Gastrocnemius medialis (tissue), 4 donors: ENCODE measurements at regions of chr2 and their contacts with region 1.

Region 1: GRCh38 chr2:173021939-173022371 is 53.7 kb upstream of the MAP3K20 start:
- DNase-seq: no peak
- ATAC-seq: peak in 1 of 2 donors; percentile 43
- H3K4me3 ChIP-seq: no peak overlapping the region
- H3K27ac ChIP-seq: no peak overlapping the region
- H3K4me1 ChIP-seq: peaks cover 7% of the 10 kb centered on the region in 2 donors
- H3K27me3 ChIP-seq: no peaks in the 10 kb centered on the region
- CTCF ChIP-seq: peak in 4 of 5 experiments; percentile 16 to 45 (median 36)
- POLR2A ChIP-seq: no peak

Region 2: GRCh38 chr2:171811245-171811628 is 1210.7 kb before region 1 on chr2:
- in situ Hi-C with region 1: no loop called
- intact Hi-C with region 1: no loop called
- DNase-seq: no peak
- ATAC-seq: peak; percentile 53 to 56
- H3K4me3 ChIP-seq: no peak overlapping the region
- H3K27ac ChIP-seq: peak overlapping the region in 2 of 4 donors; percentile 1 to 31
- H3K4me1 ChIP-seq: peaks cover 0 to 35% of the 10 kb centered on the region in 2 donors
- H3K27me3 ChIP-seq: no peaks in the 10 kb centered on the region
- CTCF ChIP-seq: peak in 4 of 5 experiments; percentile 21 to 40 (median 28)
- POLR2A ChIP-seq: no peak

Region 3: GRCh38 chr2:172977270-172978062 is 44.5 kb before region 1 on chr2:
- in situ Hi-C with region 1: loop called in 2 of 4 experiments (anchors 5 kb)
- intact Hi-C with region 1: loop called (anchors 1 kb)
- DNase-seq: peak in 1 of 2 donors; percentile 36
- ATAC-seq: peak; percentile 81 to 84
- H3K4me3 ChIP-seq: no peak overlapping the region
- H3K27ac ChIP-seq: no peak overlapping the region
- H3K4me1 ChIP-seq: peaks cover 0 to 7% of the 10 kb centered on the region in 2 donors
- H3K27me3 ChIP-seq: no peaks in the 10 kb centered on the region
- CTCF ChIP-seq: peak; percentile 26 to 62 (median 55)
- POLR2A ChIP-seq: no peak

Region 4: GRCh38 chr2:172985139-172985901 is 36.6 kb before region 1 on chr2:
- in situ Hi-C with region 1: no loop called
- intact Hi-C with region 1: loop called (anchors 1 kb)
- DNase-seq: peak; percentile 52 to 62
- ATAC-seq: peak; percentile 91 to 92
- H3K4me3 ChIP-seq: peak overlapping the region; percentile 28 to 34 (median 30)
- H3K27ac ChIP-seq: peak overlapping the region; percentile 68 to 79 (median 73)
- H3K4me1 ChIP-seq: peaks cover 15 to 19% of the 10 kb centered on the region in 2 donors
- H3K27me3 ChIP-seq: no peaks in the 10 kb centered on the region
- CTCF ChIP-seq: no peak
- POLR2A ChIP-seq: peak in 1 of 2 donors; percentile 21

Region 5: DNA sequence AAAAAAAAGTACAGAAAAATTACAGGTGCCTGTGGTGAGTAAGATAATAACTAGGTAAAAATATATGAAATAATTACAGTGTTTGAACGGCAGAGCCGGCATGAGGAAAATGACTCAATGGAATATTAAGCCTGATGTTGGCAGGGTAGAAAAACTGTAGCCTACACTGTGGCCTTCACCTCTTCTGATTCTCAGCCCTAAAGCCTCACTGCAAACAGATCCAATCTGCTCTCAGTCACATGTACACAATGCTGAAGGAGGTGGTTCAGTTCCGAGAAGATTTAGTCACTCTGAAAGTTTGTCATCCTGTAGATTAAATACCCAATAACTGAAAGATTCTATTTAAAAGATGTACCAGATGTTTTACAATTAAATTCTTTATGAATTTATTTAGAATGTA is 13.2 kb before region 1 on chr2:
- in situ Hi-C with region 1: no loop called
- intact Hi-C with region 1: loop called (anchors 2 kb)
- DNase-seq: no peak
- ATAC-seq: no peak
- H3K4me3 ChIP-seq: no peak overlapping the region
- H3K27ac ChIP-seq: no peak overlapping the region
- H3K4me1 ChIP-seq: peaks cover 7 to 11% of the 10 kb centered on the region in 2 donors
- H3K27me3 ChIP-seq: no peaks in the 10 kb centered on the region
- CTCF ChIP-seq: no peak
- POLR2A ChIP-seq: no peak